A549 (cell line): ENCODE measurements at regions of chr12 and their contacts with region 1.

Region 1: DNA sequence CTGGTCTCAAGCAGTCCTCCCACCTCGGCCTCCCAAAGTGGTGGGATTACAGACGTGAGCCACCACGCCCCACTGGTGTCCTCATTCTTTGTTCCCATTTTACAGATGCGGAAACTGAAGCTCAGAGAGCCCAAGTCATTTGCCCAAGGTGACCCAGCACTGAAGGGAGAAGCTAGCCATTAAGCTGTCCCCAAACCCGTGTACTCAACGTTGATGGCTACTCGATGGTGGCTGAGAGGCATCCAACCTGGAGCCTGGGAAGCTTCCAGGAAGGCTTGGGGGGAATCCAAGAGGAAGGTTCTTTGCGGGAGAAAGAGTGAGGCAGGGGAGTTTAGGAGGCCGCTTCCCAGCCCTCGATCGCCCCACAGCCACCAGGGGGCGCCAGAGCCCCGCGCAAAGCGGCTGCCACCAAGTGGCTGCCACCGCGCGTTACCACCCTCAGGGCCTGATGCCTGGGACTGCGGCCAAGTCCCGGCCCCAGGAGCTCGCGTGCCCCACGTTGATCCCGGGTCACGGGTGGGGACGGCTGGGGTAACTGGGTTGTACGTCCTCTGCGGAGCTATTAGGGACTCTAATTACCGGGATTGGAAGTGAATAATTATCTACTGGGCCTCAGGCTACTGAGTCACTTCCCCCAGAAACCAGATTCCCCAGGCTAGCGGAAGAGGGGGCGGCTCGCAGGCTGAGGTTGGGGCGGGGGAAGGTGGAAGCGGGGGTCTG is 8.8 kb upstream of the SH2B3 start:
- DNase-seq: peak; percentile 85 to 87
- ATAC-seq: peak; percentile 87 to 97
- H3K4me3 ChIP-seq: peak overlapping the region; percentile 33
- H3K27ac ChIP-seq: peak overlapping the region; percentile 66 to 83
- H3K4me1 ChIP-seq: peaks cover 6% of the 10 kb centered on the region; the same call in 1 of the 3 replicates
- CTCF ChIP-seq: peak; percentile 99
- EP300 ChIP-seq: no peak; a peak in 1 of 5 replicates
- POLR2A ChIP-seq: no peak
- RAD21 ChIP-seq: peak; percentile 96 to 97

Region 2: GRCh38 chr12:111339321-111339938 is 57.5 kb before region 1 on chr12:
- CTCF ChIA-PET with region 1: interaction called, 44 read pairs
- POLR2A ChIA-PET with region 1: no interaction called
- DNase-seq: no peak
- ATAC-seq: no peak
- H3K4me3 ChIP-seq: no peak overlapping the region
- H3K27ac ChIP-seq: no peak overlapping the region
- H3K4me1 ChIP-seq: no peaks in the 10 kb centered on the region
- CTCF ChIP-seq: no peak
- EP300 ChIP-seq: no peak
- POLR2A ChIP-seq: no peak
- RAD21 ChIP-seq: no peak

Region 3: DNA sequence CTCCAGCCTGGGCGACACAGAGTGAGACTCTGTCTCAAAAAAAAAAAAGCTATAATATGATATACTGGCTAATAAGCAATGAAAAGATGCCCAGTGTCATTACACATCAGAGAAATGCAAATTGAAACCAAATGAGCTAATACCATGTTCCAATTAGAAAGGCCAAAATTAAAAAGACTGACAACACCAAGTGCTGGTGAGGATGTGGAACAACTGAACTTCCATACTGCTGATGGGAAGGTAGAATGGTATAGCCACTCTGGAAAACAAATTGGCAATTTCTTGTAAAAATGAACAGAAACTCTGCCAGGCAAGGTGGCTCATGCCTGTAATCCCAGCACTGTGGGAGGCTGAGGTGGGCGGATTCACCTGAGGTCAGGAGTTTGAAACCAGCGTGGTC is 19.4 kb before region 1 on chr12:
- CTCF ChIA-PET with region 1: interaction called, 77 read pairs
- POLR2A ChIA-PET with region 1: no interaction called
- DNase-seq: no peak
- ATAC-seq: no peak
- H3K4me3 ChIP-seq: no peak overlapping the region
- H3K27ac ChIP-seq: no peak overlapping the region
- H3K4me1 ChIP-seq: no peaks in the 10 kb centered on the region
- CTCF ChIP-seq: no peak
- EP300 ChIP-seq: no peak
- POLR2A ChIP-seq: no peak
- RAD21 ChIP-seq: no peak

Region 4: GRCh38 chr12:111424793-111425251 is 27.9 kb after region 1 on chr12:
- CTCF ChIA-PET with region 1: interaction called, 24 read pairs
- POLR2A ChIA-PET with region 1: no interaction called
- DNase-seq: no peak
- ATAC-seq: peak; percentile 54 to 66; a peak in 4 of 6 replicates
- H3K4me3 ChIP-seq: no peak overlapping the region
- H3K27ac ChIP-seq: peak overlapping the region in 1 of 2 experiments; percentile 40; a peak in 2 of 6 replicates
- H3K4me1 ChIP-seq: peaks cover 10% of the 10 kb centered on the region; the same call in 2 of the 3 replicates
- CTCF ChIP-seq: no peak
- EP300 ChIP-seq: no peak
- POLR2A ChIP-seq: no peak
- RAD21 ChIP-seq: no peak

Region 5: DNA sequence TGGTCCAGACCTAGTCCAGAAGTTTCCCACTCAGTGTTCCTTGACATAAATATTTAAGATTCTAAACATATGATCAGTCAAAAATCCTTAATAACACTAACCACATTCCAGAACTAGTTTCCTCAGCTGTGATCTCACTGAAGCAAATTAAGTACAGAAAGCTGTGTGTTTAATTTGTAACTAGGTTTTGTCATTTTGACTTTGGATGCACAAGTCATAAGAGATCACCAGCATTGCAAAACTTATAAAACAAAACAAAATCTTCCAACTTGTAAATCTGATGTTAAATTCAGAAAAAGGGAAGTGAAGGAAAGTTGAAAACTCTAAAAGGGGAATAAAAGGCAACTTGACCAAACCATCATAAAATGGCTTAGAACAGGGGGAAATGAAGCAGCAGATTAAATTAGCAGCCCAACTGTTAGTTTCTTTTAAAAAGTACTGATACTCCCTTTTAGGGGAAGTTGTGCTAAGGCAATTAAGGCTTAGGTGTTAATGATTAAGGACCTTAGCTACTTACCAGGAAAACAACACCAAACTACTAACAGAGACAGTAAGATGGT is 65.4 kb after region 1 on chr12:
- CTCF ChIA-PET with region 1: interaction called, 240 read pairs
- POLR2A ChIA-PET with region 1: no interaction called
- DNase-seq: no peak
- ATAC-seq: no peak
- H3K4me3 ChIP-seq: no peak overlapping the region
- H3K27ac ChIP-seq: no peak overlapping the region
- H3K4me1 ChIP-seq: peaks cover 14% of the 10 kb centered on the region
- CTCF ChIP-seq: no peak
- EP300 ChIP-seq: no peak
- POLR2A ChIP-seq: no peak
- RAD21 ChIP-seq: no peak

Region 6: DNA sequence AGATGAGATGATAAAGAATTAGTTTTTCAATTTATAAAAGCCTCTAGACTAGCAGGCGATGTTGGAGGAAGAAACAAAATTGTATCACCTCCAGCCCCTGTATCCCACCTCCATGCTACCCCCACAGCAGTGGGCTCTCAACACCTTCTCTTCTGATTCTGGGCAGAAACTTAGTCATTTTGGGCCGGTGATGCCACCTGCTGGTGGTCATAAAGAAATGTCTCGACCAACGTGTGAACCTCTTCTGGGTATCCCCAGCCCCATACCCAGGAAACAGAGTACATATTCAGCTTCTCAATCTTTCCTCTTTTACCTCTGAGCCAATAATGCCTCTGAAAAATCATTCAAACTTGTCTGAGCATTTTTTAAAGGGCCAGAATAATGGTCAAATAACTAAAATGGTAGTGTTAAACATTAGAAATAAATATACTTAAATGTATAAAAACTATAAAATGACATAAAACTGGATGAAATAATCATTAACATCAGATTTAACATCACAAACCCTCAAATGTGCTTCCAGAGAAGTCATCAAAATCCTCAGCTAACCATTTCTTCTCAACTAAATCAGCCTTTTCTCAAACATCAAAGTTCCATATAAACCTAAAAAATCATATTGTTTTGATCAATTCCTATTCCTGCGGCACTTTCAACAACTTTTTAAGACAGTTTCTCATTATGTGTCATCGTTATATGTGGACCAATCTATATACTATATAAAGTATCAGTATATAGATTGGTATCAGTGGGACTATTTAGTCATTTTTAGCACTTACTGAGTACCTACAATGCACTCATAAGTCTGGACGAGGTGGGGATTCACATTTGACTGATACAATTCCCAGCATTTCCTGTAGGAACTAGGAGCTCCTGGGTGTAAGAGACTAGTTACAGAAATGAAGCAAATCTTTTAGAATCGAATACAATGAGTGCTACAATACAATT is 132.8 kb after region 1 on chr12:
- CTCF ChIA-PET with region 1: interaction called, 22 read pairs
- POLR2A ChIA-PET with region 1: no interaction called
- DNase-seq: peak; percentile 74 to 88
- ATAC-seq: peak; percentile 90 to 92
- H3K4me3 ChIP-seq: no peak overlapping the region
- H3K27ac ChIP-seq: no peak overlapping the region
- H3K4me1 ChIP-seq: no peaks in the 10 kb centered on the region
- CTCF ChIP-seq: peak; percentile 72
- EP300 ChIP-seq: no peak
- POLR2A ChIP-seq: no peak
- RAD21 ChIP-seq: peak; percentile 54 to 64

Region 7: GRCh38 chr12:111812881-111813741 is 416.2 kb after region 1 on chr12:
- CTCF ChIA-PET with region 1: interaction called, 11 read pairs
- POLR2A ChIA-PET with region 1: no interaction called
- DNase-seq: peak; percentile 89 to 90
- ATAC-seq: peak; percentile 95 to 96
- H3K4me3 ChIP-seq: no peak overlapping the region
- H3K27ac ChIP-seq: no peak overlapping the region
- H3K4me1 ChIP-seq: peaks cover 3% of the 10 kb centered on the region; the same call in 1 of the 3 replicates
- CTCF ChIP-seq: peak; percentile 87
- EP300 ChIP-seq: no peak
- POLR2A ChIP-seq: no peak
- RAD21 ChIP-seq: peak; percentile 85 to 91